A673 (cell line): ENCODE measurements at regions of chr9 and their contacts with region 1.

Region 1: GRCh38 chr9:31916591-31917241 is 467.7 kb upstream of the ACO1 start:
- DNase-seq: no peak
- H3K4me3 ChIP-seq: no peak overlapping the region
- H3K27ac ChIP-seq: no peak overlapping the region
- H3K4me1 ChIP-seq: no peaks in the 10 kb centered on the region
- H3K27me3 ChIP-seq: no peaks in the 10 kb centered on the region
- CTCF ChIP-seq: no peak

Region 2: GRCh38 chr9:31868830-31869229 is 47.9 kb before region 1 on chr9:
- CTCF ChIA-PET with region 1: no interaction called
- POLR2A ChIA-PET with region 1: no interaction called
- intact Hi-C with region 1: loop called (anchors 10 kb)
- DNase-seq: no peak
- H3K4me3 ChIP-seq: no peak overlapping the region
- H3K27ac ChIP-seq: no peak overlapping the region
- H3K4me1 ChIP-seq: no peaks in the 10 kb centered on the region
- H3K27me3 ChIP-seq: no peaks in the 10 kb centered on the region
- CTCF ChIP-seq: no peak

Region 3: DNA sequence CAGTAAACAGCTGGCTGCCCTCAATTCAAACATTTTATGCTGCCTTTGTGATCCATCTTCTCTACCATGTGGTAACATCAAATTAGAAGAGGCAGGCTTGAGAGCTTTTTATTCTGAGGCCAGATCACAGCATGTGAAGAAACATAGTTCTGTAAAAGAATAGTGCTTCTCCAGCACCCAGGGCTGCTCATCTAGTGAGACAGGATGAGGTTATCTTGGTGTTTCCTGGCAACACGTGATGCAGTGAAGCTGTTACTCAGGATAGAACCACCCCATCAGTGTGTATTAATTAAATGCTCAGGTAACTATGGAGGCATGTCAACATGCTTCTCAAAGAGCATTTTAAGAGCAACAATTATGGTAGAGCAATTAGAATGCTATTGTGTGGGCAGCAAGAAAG is 67.2 kb after region 1 on chr9:
- CTCF ChIA-PET with region 1: no interaction called
- POLR2A ChIA-PET with region 1: no interaction called
- intact Hi-C with region 1: loop called (anchors 10 kb)
- DNase-seq: no peak
- H3K4me3 ChIP-seq: no peak overlapping the region
- H3K27ac ChIP-seq: no peak overlapping the region
- H3K4me1 ChIP-seq: no peaks in the 10 kb centered on the region
- H3K27me3 ChIP-seq: no peaks in the 10 kb centered on the region
- CTCF ChIP-seq: no peak